PC-3 (cell line): ENCODE measurements at regions of chr9 and their contacts with region 1.

Region 1: GRCh38 chr9:4297151-4297785 is 2.6 kb downstream of the GLIS3 start:
- DNase-seq: peak; percentile 75
- ATAC-seq: peak; percentile 32
- H3K4me3 ChIP-seq: peak overlapping the region; percentile 94
- H3K27ac ChIP-seq: peak overlapping the region; percentile 91
- H3K4me1 ChIP-seq: peaks cover 57% of the 10 kb centered on the region
- H3K27me3 ChIP-seq: no peaks in the 10 kb centered on the region
- CTCF ChIP-seq: peak; percentile 61

Region 2: DNA sequence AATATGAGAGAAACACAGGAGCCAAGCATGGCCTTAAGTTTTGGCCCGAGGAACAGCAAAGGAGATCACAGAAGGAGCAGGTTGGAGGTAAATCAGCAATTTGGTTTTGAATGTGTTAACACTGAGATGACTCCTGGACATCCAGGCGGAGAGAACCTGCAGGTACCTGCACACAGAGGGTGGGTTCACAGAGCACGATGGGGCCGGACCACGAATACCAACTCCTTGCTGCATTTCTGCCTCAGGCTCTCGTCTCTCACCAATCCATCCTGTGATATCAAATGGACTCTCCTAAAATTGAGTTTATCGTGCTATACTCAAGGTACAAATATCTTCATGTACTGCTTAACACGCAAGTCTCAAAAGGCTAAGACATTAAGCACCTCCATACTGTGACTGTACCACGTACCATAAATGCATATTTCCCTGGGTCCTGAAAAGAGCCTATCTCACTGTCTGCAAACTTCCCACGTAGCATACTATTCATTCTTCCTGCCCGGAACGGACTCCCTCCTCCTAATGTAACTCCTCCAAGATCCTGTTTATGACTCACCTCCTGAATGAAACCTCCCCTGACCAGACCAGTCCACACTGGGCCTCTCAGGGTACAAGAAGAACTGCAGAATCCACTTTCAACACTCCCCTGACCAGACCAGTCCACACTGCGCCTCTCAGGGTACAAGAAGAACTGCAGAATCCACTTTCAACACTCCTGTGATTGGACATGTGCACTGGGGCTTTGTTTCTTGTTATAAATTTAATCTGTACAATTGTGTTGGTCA is 390.6 kb before region 1 on chr9:
- CTCF ChIA-PET with region 1: interaction called, 12 read pairs
- POLR2A ChIA-PET with region 1: no interaction called
- intact Hi-C with region 1: no loop called
- DNase-seq: peak; percentile 88
- ATAC-seq: peak; percentile 98
- H3K4me3 ChIP-seq: no peak overlapping the region
- H3K27ac ChIP-seq: peak overlapping the region; percentile 98
- H3K4me1 ChIP-seq: peaks cover 19% of the 10 kb centered on the region
- H3K27me3 ChIP-seq: no peaks in the 10 kb centered on the region
- CTCF ChIP-seq: peak; percentile 36; the same call in 1 of the 2 replicates

Region 3: DNA sequence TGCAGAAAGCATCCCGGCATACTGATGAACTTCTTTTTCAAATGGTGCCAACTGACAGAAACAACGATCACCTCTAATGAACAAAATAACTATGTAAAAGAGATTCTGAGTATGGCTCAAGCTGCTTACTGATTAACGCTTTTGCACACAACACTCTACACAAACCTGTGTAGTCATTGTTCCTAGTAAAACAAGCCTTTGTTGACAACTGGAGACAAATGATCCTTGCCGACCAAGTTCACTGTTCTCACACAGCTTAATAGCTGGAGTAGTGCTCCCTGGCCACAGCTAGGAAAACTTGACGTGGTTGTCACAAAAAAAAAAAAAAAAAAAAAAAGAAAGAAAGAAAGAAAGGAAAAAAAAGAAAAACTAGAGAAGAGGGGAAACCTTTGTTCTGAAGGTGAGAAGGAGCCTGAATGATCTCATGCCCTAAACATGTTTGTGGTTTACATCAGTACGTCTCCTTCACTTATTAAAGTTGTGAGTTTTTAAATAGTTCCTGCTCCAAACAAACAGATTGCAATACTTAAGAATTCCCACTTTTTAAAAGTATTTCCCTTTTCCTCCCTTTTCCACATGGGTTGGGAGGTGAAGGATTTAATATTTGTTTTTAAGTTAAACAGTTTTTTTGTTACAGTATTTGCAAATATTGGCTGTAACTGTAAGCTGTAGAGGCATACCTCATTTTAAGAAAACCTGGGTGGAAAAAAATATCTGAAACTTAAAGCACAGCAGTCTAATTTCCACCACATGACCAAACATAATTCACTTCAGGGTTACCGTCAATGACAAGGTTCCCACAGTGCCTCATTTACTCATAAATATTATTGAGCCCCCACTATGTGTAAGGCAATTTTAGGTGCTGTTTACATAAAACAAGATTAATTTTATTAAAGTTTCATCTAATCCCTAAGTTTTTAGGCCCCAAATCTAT is 61.1 kb before region 1 on chr9:
- CTCF ChIA-PET with region 1: interaction called, 4 read pairs
- POLR2A ChIA-PET with region 1: no interaction called
- intact Hi-C with region 1: loop called (anchors 2 kb)
- DNase-seq: peak; percentile 63
- ATAC-seq: peak; percentile 79
- H3K4me3 ChIP-seq: peak overlapping the region; percentile 25; the same call in 1 of the 2 replicates
- H3K27ac ChIP-seq: peak overlapping the region; percentile 71
- H3K4me1 ChIP-seq: peaks cover 27% of the 10 kb centered on the region
- H3K27me3 ChIP-seq: no peaks in the 10 kb centered on the region
- CTCF ChIP-seq: no peak

Region 4: GRCh38 chr9:4339357-4339756 is 42.1 kb after region 1 on chr9:
- CTCF ChIA-PET with region 1: no interaction called
- POLR2A ChIA-PET with region 1: no interaction called
- intact Hi-C with region 1: loop called (anchors 1 kb)
- DNase-seq: peak; percentile 87
- ATAC-seq: peak; percentile 76
- H3K4me3 ChIP-seq: no peak overlapping the region
- H3K27ac ChIP-seq: no peak overlapping the region
- H3K4me1 ChIP-seq: no peaks in the 10 kb centered on the region
- H3K27me3 ChIP-seq: no peaks in the 10 kb centered on the region
- CTCF ChIP-seq: peak; percentile 89

Region 5: GRCh38 chr9:4356306-4356705 is 59.0 kb after region 1 on chr9:
- CTCF ChIA-PET with region 1: no interaction called
- POLR2A ChIA-PET with region 1: no interaction called
- intact Hi-C with region 1: no loop called
- DNase-seq: no peak
- ATAC-seq: no peak
- H3K4me3 ChIP-seq: no peak overlapping the region
- H3K27ac ChIP-seq: no peak overlapping the region
- H3K4me1 ChIP-seq: no peaks in the 10 kb centered on the region
- H3K27me3 ChIP-seq: no peaks in the 10 kb centered on the region
- CTCF ChIP-seq: no peak